A673 (cell line): ENCODE measurements at regions of chr5 and their contacts with region 1.

Region 1: DNA sequence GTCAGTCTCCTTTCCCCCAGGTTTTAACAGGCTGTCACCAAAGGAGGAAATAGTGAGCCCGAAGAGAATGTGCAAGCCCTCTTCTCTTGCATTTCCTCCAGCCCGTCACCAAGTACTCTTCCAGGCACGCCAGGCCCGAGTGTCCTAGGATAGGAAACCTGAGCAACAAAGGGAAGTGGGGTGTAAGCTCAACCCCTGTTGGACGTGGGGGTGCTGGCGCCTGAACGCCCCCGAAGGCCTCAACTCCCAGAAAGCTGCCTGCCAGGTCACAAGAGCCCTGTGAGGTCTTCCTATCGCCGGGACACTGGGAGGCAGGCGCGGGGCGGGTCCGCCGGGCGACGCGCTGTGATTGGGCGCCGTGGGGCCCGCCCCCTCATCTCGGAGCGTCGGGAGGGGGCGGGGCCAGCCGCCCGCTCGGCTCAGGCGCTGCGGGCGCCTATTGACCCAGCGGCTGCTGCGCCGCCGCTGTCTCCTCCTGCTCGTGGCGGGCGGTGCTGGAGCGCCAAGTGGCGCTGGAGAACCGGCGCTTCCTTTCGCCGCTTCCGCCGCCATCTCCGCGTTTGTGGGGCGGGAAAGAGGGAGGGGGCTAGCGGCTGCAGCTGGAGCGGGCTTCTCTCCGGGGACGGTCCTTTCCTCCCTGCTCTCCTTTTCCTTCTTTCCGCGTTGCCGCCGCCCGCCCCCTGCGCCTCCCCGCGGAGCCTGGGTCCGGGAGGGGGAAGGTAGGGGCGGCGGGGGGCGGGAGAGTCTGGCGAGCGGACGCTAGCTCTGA is 572 bp upstream of the MAN2A1 start:
- DNase-seq: peak; percentile 95
- H3K4me3 ChIP-seq: peak overlapping the region; percentile 91
- H3K27ac ChIP-seq: peak overlapping the region; percentile 95
- H3K4me1 ChIP-seq: peaks cover 28% of the 10 kb centered on the region
- H3K27me3 ChIP-seq: no peaks in the 10 kb centered on the region
- CTCF ChIP-seq: no peak

Region 2: GRCh38 chr5:108481355-108481931 is 1207.7 kb before region 1 on chr5:
- CTCF ChIA-PET with region 1: no interaction called
- POLR2A ChIA-PET with region 1: no interaction called
- intact Hi-C with region 1: loop called (anchors 10 kb)
- DNase-seq: peak; percentile 70
- H3K4me3 ChIP-seq: no peak overlapping the region
- H3K27ac ChIP-seq: no peak overlapping the region
- H3K4me1 ChIP-seq: no peaks in the 10 kb centered on the region
- H3K27me3 ChIP-seq: no peaks in the 10 kb centered on the region
- CTCF ChIP-seq: peak; percentile 65

Region 3: GRCh38 chr5:108642167-108642906 is 1046.8 kb before region 1 on chr5:
- CTCF ChIA-PET with region 1: no interaction called
- POLR2A ChIA-PET with region 1: interaction called, 4 read pairs
- intact Hi-C with region 1: loop called (anchors 5 kb)
- DNase-seq: peak; percentile 92
- H3K4me3 ChIP-seq: no peak overlapping the region
- H3K27ac ChIP-seq: peak overlapping the region; percentile 43
- H3K4me1 ChIP-seq: peaks cover 26% of the 10 kb centered on the region
- H3K27me3 ChIP-seq: no peaks in the 10 kb centered on the region
- CTCF ChIP-seq: peak; percentile 92

Region 4: DNA sequence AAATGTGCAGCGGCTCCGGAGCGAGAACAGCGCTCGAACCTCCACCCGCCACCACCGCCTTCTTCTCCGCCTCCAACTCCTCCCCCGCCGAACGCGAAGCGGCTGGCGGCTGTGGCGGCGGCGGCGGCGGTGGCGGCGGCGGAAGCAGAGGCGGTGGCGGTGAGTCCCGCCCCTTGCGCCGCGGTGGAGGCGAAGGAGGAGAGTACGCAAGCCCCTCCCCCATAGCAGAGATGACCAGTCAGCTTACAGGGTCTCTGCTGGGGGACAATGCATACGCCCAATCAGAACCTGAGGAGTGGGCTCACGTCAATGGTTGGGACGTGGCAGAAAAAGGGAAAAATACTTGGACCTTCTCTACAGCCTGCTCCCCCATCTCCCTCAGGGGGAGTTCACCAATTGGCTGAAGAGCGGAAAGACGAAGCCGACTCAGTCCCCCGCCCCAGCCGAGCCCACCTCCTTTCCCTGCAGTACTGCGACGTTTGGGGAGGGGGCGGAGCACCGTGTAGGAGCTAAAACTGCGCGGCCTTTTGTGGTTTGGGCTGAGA is 279.2 kb before region 1 on chr5 and contains the start of gene PJA2:
- CTCF ChIA-PET with region 1: no interaction called
- POLR2A ChIA-PET with region 1: no interaction called
- intact Hi-C with region 1: loop called (anchors 10 kb)
- DNase-seq: peak; percentile 100
- H3K4me3 ChIP-seq: peak within 1 kb of the TSS; percentile 61
- H3K27ac ChIP-seq: peak within 1 kb of the TSS; percentile 96
- H3K4me1 ChIP-seq: peaks cover 16% of the 10 kb centered on the region
- H3K27me3 ChIP-seq: no peaks in the 10 kb centered on the region
- CTCF ChIP-seq: no peak
- total RNA-seq, gene PJA2: 47.3 and 55.2 TPM in 2 replicates

Region 5: DNA sequence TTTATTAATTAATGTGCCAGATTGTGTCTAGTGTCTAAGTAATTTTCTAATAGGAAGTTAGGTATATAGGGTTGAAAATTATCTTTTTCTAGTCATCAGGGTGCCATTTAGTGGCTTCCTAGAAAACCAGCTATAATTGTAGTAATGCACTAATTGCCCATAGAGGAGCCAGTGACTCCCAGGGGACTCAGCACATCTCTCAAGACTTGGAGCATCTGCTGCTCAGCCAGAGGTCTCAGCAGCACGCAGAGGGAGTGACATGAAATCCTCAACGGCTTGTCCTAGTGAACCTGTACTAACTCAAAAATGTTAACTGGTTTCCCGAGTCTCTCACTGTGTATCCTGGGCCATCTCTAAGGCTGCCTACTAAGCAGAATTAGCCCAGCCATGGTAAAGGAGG is 77.7 kb before region 1 on chr5:
- CTCF ChIA-PET with region 1: interaction called, 12 read pairs
- POLR2A ChIA-PET with region 1: interaction called, 3 read pairs
- intact Hi-C with region 1: loop called (anchors 1 kb)
- DNase-seq: peak; percentile 99
- H3K4me3 ChIP-seq: no peak overlapping the region
- H3K27ac ChIP-seq: peak overlapping the region; percentile 99
- H3K4me1 ChIP-seq: peaks cover 57% of the 10 kb centered on the region
- H3K27me3 ChIP-seq: no peaks in the 10 kb centered on the region
- CTCF ChIP-seq: no peak

Region 6: DNA sequence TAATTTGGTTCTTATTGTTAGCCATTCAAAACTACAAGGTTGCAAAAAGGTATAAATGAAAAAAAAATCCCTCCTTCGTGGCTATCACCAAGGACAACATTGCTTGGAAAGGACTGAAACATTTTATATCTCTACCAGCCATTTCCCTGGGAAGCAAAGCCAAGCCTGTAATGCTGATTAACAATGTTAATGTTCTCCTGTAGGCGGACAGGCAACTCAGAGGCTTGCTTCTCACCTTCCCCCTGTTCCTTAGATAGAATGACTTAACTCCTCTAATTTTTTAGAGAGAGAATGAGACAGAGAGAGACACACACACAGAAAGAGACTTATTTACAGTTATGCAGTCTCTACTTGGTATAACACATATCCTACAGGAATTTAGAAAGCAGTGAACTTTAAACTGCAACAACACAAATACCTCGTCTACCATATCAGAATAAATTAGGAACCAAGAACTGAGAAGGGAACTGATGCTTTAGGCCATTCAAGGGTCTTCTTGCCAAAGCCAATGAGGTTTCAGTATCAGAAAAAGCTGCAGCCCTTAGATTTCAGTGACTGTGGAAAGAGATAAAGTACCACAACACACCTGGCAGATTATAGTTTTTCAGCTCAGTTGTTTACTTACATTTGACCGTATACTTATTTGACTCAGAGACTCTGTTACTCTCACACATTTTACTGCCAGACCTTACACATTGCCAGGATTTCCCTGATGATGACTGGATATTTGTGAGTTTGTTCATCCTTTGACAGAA is 20.3 kb before region 1 on chr5:
- CTCF ChIA-PET with region 1: no interaction called
- POLR2A ChIA-PET with region 1: no interaction called
- intact Hi-C with region 1: no loop called
- DNase-seq: no peak
- H3K4me3 ChIP-seq: no peak overlapping the region
- H3K27ac ChIP-seq: no peak overlapping the region
- H3K4me1 ChIP-seq: no peaks in the 10 kb centered on the region
- H3K27me3 ChIP-seq: no peaks in the 10 kb centered on the region
- CTCF ChIP-seq: no peak

Region 7: GRCh38 chr5:109759306-109759705 is 70.2 kb after region 1 on chr5:
- CTCF ChIA-PET with region 1: no interaction called
- POLR2A ChIA-PET with region 1: no interaction called
- intact Hi-C with region 1: loop called (anchors 5 kb)
- DNase-seq: peak; percentile 72
- H3K4me3 ChIP-seq: no peak overlapping the region
- H3K27ac ChIP-seq: peak overlapping the region; percentile 62
- H3K4me1 ChIP-seq: peaks cover 12% of the 10 kb centered on the region
- H3K27me3 ChIP-seq: no peaks in the 10 kb centered on the region
- CTCF ChIP-seq: no peak

Region 8: DNA sequence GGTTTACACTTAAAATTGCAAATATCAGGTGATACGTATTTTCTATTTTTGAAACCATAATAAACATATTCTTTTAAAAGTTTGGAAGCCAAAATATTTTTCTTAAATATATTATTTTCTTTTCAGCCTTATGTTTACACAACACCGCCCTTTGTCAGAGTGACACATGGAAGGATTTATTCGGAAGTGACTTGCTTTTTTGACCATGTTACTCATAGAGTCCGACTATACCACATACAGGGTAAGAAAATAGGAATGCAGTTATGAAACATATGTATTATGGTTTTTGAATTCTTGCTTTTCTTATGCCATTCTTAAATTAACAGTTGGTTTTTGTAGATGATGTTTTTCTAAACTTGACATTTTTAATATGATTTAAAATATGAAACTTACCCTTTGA is 134.4 kb after region 1 on chr5:
- CTCF ChIA-PET with region 1: no interaction called
- POLR2A ChIA-PET with region 1: no interaction called
- intact Hi-C with region 1: no loop called
- DNase-seq: no peak
- H3K4me3 ChIP-seq: no peak overlapping the region
- H3K27ac ChIP-seq: no peak overlapping the region
- H3K4me1 ChIP-seq: no peaks in the 10 kb centered on the region
- H3K27me3 ChIP-seq: no peaks in the 10 kb centered on the region
- CTCF ChIP-seq: no peak

Region 9: DNA sequence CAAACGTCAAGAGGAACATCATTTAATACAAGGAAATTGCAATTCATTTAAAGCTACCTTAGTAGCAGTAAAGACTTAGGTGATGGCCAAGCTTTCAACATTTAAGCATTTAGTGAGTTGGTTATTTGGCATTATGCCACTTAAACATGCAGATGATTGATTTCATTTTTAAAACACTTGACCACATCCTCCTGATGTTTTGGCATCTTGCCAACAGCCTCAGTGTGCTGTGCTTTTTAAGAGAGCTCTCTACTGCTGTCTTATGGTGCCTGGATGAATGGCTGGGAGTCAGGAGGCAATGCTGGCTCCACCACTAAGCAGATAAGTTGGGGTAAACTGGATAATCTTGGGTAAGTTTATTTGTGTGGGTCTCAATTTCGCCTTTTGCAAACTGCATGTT is 365.1 kb after region 1 on chr5:
- CTCF ChIA-PET with region 1: no interaction called
- POLR2A ChIA-PET with region 1: no interaction called
- intact Hi-C with region 1: loop called (anchors 10 kb)
- DNase-seq: peak; percentile 86
- H3K4me3 ChIP-seq: no peak overlapping the region
- H3K27ac ChIP-seq: peak overlapping the region; percentile 39
- H3K4me1 ChIP-seq: peaks cover 48% of the 10 kb centered on the region
- H3K27me3 ChIP-seq: no peaks in the 10 kb centered on the region
- CTCF ChIP-seq: peak; percentile 53